Cardiac septum (tissue), 1 donor: ENCODE measurements at regions of chr2 and their contacts with region 1.

Region 1: DNA sequence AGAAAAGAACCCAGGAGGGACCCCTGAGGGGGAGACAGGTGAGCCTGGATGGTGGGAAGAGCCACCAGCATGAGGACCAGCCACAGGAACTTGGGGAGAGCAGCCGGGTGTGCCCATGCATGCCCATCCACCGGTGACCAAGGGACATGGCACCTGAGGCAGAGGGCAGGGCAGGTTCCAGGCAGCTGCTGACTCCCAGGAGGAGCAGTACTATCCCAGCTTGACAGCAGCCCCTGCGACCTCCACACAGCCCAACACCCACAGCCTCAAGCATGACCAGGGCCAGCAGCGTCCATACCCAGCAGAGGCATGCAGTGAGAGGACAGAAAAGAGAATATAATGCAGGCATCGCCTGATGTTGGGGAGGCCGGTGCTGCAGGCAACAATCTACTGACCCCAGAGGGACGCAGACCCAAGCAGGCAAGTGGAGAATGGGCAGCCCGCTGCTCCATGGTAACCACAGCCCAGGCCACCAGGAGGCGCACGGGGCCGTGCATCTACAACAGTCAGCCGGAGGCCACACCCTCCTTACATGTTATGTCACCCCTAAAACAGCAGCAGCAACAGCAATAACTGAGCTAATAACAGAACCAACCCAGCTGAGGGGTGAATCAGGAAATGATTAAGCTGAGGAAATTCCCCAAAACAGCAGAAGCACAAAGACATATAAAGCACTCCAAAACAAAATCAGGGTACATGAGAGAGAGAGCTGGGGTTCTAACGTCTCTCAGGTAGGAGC is 44.1 kb downstream of the ANKMY1 start:
- DNase-seq: peak; percentile 92

Region 2: DNA sequence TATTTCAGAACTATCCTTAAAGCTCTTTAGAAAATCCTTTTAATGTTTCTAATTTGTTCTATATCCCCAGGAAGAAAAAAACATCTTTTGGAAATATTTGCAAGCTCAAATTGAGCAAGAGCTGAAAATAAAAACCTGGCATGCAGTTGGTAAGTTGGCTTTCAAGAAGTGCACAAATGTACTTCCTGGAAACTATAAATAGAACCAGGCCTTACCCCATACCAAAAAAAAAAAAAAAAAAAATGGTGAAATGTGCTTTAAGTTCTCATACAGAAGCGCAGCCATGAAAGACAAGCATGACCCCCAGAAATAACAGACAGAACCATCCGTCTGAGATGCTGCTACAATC is 1291.4 kb before region 1 on chr2:
- intact Hi-C with region 1: no loop called
- DNase-seq: no peak

Region 3: GRCh38 chr2:240704651-240705050 is 190.9 kb after region 1 on chr2:
- intact Hi-C with region 1: loop called (anchors 10 kb)
- DNase-seq: no peak